ENCODE measurements at regions of chr17 and their contacts with region 1.

Region 1: GRCh38 chr17:46193626-46194392 is 580 bp upstream of the KANSL1 start:
- DNase-seq: peak; percentile 89
- ATAC-seq: peak; percentile 93
- H3K4me3 Mint-ChIP-seq: peak overlapping the region; percentile 70
- H3K27ac Mint-ChIP-seq: peak overlapping the region; percentile 71
- H3K4me1 Mint-ChIP-seq: peaks cover 29% of the 10 kb centered on the region
- H3K27me3 Mint-ChIP-seq: 0 out of 2 replicates have a peak, but pooled peaks cover 2% of the 10 kb centered on the region
- CTCF ChIP-seq: 0 out of 2 replicates have a peak, but pooled peaks have one; percentile 38

Region 2: DNA sequence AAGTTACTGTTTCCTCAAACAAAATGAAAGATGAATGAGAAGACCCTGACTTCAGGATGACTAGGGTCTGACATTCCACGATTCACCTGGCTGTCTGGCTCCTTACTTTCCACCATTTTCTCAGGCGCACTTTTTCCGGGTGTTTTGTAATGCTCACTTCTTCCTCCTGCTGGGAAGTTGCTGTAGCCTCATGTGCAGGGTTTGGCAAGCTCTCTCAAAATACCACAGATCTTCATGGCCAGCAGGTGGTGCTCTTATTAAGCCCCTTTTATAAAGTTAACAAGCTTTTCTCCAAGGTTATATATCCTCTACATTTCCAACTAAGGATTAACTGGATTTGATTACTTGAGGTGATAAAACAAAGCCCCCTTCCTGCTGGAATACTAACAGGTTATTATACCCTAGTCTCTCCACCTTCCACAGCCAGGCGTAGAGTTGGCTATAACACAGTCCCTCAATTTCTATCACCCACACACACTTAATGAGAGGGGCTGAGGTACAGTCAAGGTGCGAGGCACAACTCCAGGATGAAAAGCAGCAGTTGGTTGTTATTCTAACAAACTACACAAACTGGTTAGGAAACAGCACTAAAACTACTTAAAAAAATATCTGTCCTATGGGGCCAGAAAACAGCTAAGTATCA is 149.4 kb before region 1 on chr17:
- CTCF ChIA-PET with region 1: interaction called, 11 read pairs
- POLR2A ChIA-PET with region 1: interaction called, 3 read pairs
- DNase-seq: peak; percentile 56
- ATAC-seq: peak; percentile 87
- H3K4me3 Mint-ChIP-seq: no peak overlapping the region
- H3K27ac Mint-ChIP-seq: peak overlapping the region; percentile 84
- H3K4me1 Mint-ChIP-seq: peaks cover 11% of the 10 kb centered on the region
- H3K27me3 Mint-ChIP-seq: no peaks in the 10 kb centered on the region
- CTCF ChIP-seq: peak; percentile 24; the same call in 1 of the 2 replicates

Region 3: DNA sequence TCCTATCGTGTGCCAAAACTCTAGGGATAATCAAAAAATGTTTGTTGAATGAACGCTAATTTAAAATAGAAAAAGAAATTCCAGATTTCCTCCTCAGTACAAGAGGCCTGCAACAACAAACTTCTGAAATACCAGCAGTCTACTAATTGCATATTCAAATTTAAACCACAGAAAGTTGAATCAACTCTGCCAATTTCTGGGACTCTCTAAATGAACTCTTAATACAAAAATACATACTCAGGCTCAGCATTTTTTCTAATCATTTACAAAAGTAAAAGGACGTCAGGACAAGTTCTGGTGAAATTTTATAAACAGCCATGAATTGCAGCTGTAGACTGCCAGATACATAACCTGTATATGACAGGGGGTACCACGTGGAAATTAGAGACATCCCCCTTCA is 49.6 kb before region 1 on chr17:
- CTCF ChIA-PET with region 1: interaction called, 11 read pairs
- POLR2A ChIA-PET with region 1: no interaction called
- DNase-seq: no peak
- ATAC-seq: no peak
- H3K4me3 Mint-ChIP-seq: no peak overlapping the region
- H3K27ac Mint-ChIP-seq: peak overlapping the region; percentile 94
- H3K4me1 Mint-ChIP-seq: peaks cover 74% of the 10 kb centered on the region
- H3K27me3 Mint-ChIP-seq: no peaks in the 10 kb centered on the region
- CTCF ChIP-seq: no peak

Region 4: GRCh38 chr17:46171939-46172338 is 21.9 kb before region 1 on chr17:
- CTCF ChIA-PET with region 1: interaction called, 10 read pairs
- POLR2A ChIA-PET with region 1: no interaction called
- DNase-seq: no peak
- ATAC-seq: no peak
- H3K4me3 Mint-ChIP-seq: no peak overlapping the region
- H3K27ac Mint-ChIP-seq: peak overlapping the region; percentile 92
- H3K4me1 Mint-ChIP-seq: peaks cover 58% of the 10 kb centered on the region
- H3K27me3 Mint-ChIP-seq: no peaks in the 10 kb centered on the region; the same call in 1 of the 2 replicates
- CTCF ChIP-seq: no peak

Region 5: DNA sequence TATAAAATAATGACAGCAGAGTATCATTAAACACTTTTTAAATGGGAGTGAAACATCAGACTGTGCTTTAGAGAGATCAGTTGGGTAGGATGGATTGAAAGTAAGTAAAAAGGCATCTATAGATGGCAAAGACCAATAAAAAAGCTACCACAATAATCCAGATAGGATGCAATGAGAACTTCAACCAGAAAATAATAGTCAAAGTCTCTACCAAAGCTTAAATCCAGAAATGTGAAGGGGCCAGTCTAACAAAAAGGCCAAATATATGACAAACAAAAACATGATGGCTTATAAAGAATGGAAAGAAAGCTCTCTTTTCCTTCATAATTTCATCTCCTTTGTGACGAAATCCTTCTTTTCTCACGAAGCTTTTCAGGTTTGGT is 12.9 kb before region 1 on chr17:
- CTCF ChIA-PET with region 1: interaction called, 12 read pairs
- POLR2A ChIA-PET with region 1: interaction called, 5 read pairs
- DNase-seq: no peak
- ATAC-seq: no peak
- H3K4me3 Mint-ChIP-seq: no peak overlapping the region
- H3K27ac Mint-ChIP-seq: peak overlapping the region; percentile 86
- H3K4me1 Mint-ChIP-seq: peaks cover 93% of the 10 kb centered on the region
- H3K27me3 Mint-ChIP-seq: no peaks in the 10 kb centered on the region
- CTCF ChIP-seq: no peak

Region 6: GRCh38 chr17:46212634-46213435 is 19.0 kb after region 1 on chr17:
- CTCF ChIA-PET with region 1: interaction called, 19 read pairs
- POLR2A ChIA-PET with region 1: interaction called, 3 read pairs
- DNase-seq: peak; percentile 27
- ATAC-seq: peak; percentile 82
- H3K4me3 Mint-ChIP-seq: no peak overlapping the region
- H3K27ac Mint-ChIP-seq: no peak overlapping the region; the same call in 1 of the 2 replicates
- H3K4me1 Mint-ChIP-seq: peaks cover 6% of the 10 kb centered on the region
- H3K27me3 Mint-ChIP-seq: no peaks in the 10 kb centered on the region
- CTCF ChIP-seq: peak; percentile 30; the same call in 1 of the 2 replicates